CD8-positive, alpha-beta T cell (primary cell): ENCODE measurements at regions of chr13 and their contacts with region 1.

Region 1: DNA sequence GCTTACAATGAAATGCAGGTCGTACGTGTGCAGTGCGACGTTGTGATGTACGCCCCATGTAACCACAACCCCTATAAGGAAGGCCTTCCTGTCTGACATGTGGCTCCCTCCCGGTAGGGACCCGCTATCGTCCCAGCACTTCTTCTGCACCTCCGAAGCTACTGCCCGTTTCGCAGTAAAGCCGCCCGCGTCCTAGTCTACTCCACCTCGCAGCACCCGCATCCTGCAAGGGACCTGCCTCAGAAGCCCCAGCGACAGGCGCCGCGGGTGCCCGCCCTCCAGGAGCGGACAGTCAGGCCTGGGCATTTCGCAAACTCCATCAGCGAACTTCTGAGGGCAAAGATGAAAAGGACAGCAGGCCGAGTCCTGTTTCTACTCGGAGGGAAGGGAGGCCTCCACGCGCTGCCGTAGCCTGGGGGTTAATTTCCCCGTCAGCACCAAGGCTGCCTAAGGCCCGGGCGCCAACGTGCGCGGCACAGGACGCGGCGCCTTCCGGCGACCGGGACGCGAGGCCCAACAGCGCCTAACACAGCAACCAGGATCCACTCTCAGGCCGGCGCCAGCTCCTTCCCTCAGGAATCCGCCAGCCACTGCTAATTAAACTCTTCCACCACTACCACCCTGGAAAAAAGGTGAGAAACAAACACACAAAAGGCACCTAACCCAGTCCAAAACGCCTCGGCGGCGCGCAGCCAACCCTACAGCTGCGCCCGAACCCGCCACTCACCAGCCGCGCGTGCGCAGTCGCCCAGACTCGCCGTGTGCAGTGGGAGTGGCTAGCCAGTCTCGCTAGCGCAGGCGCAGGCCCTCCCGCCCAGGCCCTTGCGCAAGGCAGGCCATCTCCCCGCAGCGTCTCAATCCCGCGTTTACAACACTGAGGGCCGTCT is at the start of gene EEF1AKMT1:
- DNase-seq: peak; percentile 91 to 97 (median 94)
- ATAC-seq: peak; percentile 86
- H3K4me3 ChIP-seq: peak within 1 kb of the TSS; percentile 81 to 88
- H3K4me3 Mint-ChIP-seq: peak within 1 kb of the TSS; percentile 88
- H3K27ac ChIP-seq: peak within 1 kb of the TSS; percentile 95 to 96
- H3K27ac Mint-ChIP-seq: peak within 1 kb of the TSS; percentile 95
- H3K4me1 ChIP-seq: peaks cover 20% of the 10 kb centered on the region
- H3K4me1 Mint-ChIP-seq: peaks cover 34% of the 10 kb centered on the region
- H3K27me3 ChIP-seq: no peaks in the 10 kb centered on the region
- H3K27me3 Mint-ChIP-seq: no peaks in the 10 kb centered on the region
- CTCF ChIP-seq: no peak
- total RNA-seq, gene EEF1AKMT1: 1.5 to 2.4 TPM

Region 2: GRCh38 chr13:19863323-19864023 is 910.0 kb before region 1 on chr13 and contains the start of gene ZMYM5:
- CTCF ChIA-PET with region 1: no interaction called
- POLR2A ChIA-PET with region 1: no interaction called
- intact Hi-C with region 1: loop called in 1 of 2 experiments (anchors 10 kb)
- DNase-seq: peak; percentile 85 to 98 (median 95)
- ATAC-seq: peak; percentile 83
- H3K4me3 ChIP-seq: peak within 1 kb of the TSS; percentile 64 to 74
- H3K4me3 Mint-ChIP-seq: peak within 1 kb of the TSS; percentile 90
- H3K27ac ChIP-seq: peak within 1 kb of the TSS; percentile 78 to 97
- H3K27ac Mint-ChIP-seq: peak within 1 kb of the TSS; percentile 97
- H3K4me1 ChIP-seq: peaks cover 25% of the 10 kb centered on the region
- H3K4me1 Mint-ChIP-seq: peaks cover 35% of the 10 kb centered on the region
- H3K27me3 ChIP-seq: no peaks in the 10 kb centered on the region
- H3K27me3 Mint-ChIP-seq: no peaks in the 10 kb centered on the region
- CTCF ChIP-seq: no peak
- total RNA-seq, gene ZMYM5: 25.1 to 25.8 TPM

Region 3: GRCh38 chr13:20495082-20496023 is 278.1 kb before region 1 on chr13:
- CTCF ChIA-PET with region 1: no interaction called
- POLR2A ChIA-PET with region 1: no interaction called
- intact Hi-C with region 1: loop called in 1 of 2 experiments (anchors 5 kb)
- DNase-seq: peak; percentile 25 to 79 (median 66)
- ATAC-seq: peak; percentile 98
- H3K4me3 ChIP-seq: no peak overlapping the region
- H3K4me3 Mint-ChIP-seq: no peak overlapping the region
- H3K27ac ChIP-seq: no peak overlapping the region
- H3K27ac Mint-ChIP-seq: no peak overlapping the region
- H3K4me1 ChIP-seq: no peaks in the 10 kb centered on the region
- H3K4me1 Mint-ChIP-seq: peaks cover 15% of the 10 kb centered on the region
- H3K27me3 ChIP-seq: no peaks in the 10 kb centered on the region
- H3K27me3 Mint-ChIP-seq: no peaks in the 10 kb centered on the region
- CTCF ChIP-seq: peak; percentile 99

Region 4: DNA sequence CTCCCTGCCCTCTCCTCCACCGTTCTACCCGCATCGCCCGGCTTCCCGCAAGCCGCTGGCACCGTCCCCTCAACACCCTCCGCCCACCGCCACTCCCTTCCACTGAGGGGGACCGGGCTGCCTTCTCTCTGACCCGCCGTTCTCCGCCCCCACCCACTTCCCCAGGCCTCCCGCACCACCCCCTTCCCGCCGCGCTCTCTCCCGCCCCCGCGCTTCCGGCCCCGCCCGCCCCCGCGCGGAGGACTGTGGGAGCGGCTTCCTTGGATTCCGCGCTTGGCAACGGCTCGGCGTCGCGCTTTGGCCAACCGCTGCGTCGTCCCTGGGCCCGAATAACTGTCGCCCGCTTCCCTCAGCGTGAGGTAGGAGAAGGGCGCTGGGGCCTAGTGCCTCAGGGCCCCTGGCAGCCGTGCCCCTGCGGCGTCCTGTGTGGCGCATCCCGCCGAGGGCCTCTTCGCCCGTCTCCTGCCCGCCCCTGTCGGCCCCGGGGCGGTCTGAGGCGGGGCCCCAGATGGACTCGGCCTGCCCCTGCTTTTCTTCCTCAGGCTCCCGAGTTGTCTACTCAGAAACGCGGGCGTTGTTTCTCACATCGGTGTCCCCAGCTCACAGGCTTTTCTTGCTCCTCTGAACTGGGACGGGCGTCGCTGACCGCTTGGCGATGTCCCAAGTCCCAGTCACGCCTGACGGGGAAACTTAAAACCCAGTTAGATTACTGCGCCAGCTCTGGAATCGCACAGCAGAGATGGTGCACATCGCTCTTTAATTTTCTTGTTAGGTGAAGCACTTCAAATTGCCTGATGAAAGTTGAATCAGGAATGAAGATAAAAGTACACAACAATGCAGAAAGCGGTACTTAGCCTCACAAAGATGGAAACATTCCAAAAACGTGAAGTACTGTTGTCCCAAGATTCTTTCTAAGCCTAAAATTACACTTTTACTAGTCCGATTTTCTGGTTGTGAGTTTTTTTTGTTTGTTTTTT is 206.3 kb before region 1 on chr13 and contains the start of gene IFT88:
- CTCF ChIA-PET with region 1: no interaction called
- POLR2A ChIA-PET with region 1: no interaction called
- intact Hi-C with region 1: loop called (anchors 5 kb)
- DNase-seq: peak; percentile 49 to 90 (median 80)
- ATAC-seq: peak; percentile 86
- H3K4me3 ChIP-seq: peak within 1 kb of the TSS; percentile 70 to 71
- H3K4me3 Mint-ChIP-seq: peak within 1 kb of the TSS; percentile 87
- H3K27ac ChIP-seq: peak within 1 kb of the TSS; percentile 70 to 77
- H3K27ac Mint-ChIP-seq: peak within 1 kb of the TSS; percentile 89
- H3K4me1 ChIP-seq: no peaks in the 10 kb centered on the region
- H3K4me1 Mint-ChIP-seq: peaks cover 17% of the 10 kb centered on the region
- H3K27me3 ChIP-seq: no peaks in the 10 kb centered on the region
- H3K27me3 Mint-ChIP-seq: no peaks in the 10 kb centered on the region
- CTCF ChIP-seq: no peak
- total RNA-seq, gene IFT88: 7.5 to 8.2 TPM

Region 5: DNA sequence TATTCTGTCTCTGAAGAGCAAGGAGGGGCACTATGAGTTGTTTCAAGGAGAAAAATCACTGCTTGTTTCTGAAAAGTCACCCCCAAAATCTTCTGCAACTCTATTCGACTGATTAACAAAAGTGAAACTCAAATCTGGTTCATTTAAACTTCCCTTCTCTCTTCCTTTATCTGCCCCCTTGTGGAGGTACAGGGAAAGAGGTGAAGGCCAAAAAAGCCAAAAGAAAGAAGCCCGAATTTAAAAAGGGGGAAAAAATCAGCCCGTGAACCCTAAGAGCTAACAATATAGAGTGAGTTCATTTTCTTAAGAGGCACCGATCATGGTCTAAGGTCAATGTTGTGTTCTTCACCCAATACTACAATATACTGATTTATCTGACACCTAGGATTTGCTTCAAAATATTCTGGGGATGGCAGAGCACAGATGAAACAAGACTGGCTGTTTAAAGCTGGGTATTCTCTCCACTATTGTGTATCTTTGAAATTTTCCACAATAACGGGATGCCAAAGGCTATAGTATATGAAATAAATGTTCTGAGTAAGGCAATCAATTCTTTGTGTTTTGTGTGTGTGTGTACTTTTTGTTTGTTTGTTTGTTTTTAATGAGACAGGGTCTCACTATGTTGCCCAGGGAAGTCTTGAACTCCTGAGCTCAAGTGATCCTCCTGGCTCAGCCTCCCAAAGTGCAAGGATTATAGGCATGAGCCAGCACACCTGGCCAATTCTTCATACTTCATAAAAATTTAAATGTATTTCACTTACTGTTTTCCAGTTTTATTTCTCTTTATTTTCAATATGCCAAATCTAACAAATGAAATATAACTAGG is 55.3 kb after region 1 on chr13:
- CTCF ChIA-PET with region 1: interaction called, 7 read pairs
- POLR2A ChIA-PET with region 1: interaction called, 5 read pairs
- intact Hi-C with region 1: loop called in 1 of 2 experiments (anchors 5 kb)
- DNase-seq: peak in 6 of 9 experiments; percentile 5 to 81 (median 36)
- ATAC-seq: peak; percentile 94
- H3K4me3 ChIP-seq: peak overlapping the region in 1 of 2 experiments; percentile 10
- H3K4me3 Mint-ChIP-seq: peak overlapping the region; percentile 44
- H3K27ac ChIP-seq: no peak overlapping the region
- H3K27ac Mint-ChIP-seq: peak overlapping the region; percentile 70
- H3K4me1 ChIP-seq: no peaks in the 10 kb centered on the region
- H3K4me1 Mint-ChIP-seq: peaks cover 7% of the 10 kb centered on the region
- H3K27me3 ChIP-seq: no peaks in the 10 kb centered on the region
- H3K27me3 Mint-ChIP-seq: no peaks in the 10 kb centered on the region
- CTCF ChIP-seq: peak; percentile 71

Region 6: DNA sequence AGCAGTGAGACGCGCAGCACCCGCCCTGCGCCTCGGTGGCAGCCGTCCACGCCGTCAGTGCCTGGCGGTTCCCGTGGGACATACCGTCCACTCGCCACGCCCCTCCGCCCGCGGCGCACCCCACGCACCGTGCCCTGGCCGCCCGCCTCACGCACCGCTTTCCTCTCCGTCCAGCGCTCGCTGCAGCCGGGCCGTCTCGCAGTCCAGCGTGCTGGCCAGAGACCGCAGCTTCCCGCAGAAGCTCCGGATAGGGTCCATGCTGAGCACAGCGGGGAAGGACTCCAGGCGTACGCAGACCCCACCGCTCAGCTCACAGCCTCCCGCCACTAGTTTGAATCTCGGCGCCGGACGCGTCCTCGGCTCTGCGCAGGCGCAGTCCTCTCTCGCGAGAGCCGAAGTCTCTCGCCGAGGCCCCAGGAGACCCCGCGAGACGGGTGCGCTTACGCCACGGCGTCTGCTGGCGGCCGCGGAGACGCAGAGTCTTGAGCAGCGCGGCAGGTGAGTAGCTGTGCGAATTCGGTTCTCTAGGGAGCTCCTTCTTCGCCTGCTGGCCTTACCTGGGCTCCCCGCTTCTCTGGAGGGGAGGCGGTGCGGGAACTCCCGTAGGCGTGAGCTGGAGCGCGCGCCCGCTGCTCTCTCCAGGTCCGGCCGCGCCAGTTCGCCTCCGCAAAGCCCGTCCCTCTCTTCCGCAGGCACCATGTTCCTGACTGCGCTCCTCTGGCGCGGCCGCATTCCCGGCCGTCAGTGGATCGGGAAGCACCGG is 403.0 kb after region 1 on chr13 and contains the starts of genes MRPL57 and SKA3:
- CTCF ChIA-PET with region 1: no interaction called
- POLR2A ChIA-PET with region 1: no interaction called
- intact Hi-C with region 1: loop called in 1 of 2 experiments (anchors 10 kb)
- DNase-seq: peak; percentile 86 to 97 (median 93)
- ATAC-seq: peak; percentile 97
- H3K4me3 ChIP-seq: peak within 1 kb of the TSS; percentile 83 to 93
- H3K4me3 Mint-ChIP-seq: peak within 1 kb of the TSS; percentile 97
- H3K27ac ChIP-seq: peak within 1 kb of the TSS; percentile 80 to 92
- H3K27ac Mint-ChIP-seq: peak within 1 kb of the TSS; percentile 96
- H3K4me1 ChIP-seq: peaks cover 18% of the 10 kb centered on the region
- H3K4me1 Mint-ChIP-seq: peaks cover 26% of the 10 kb centered on the region
- H3K27me3 ChIP-seq: no peaks in the 10 kb centered on the region
- H3K27me3 Mint-ChIP-seq: no peaks in the 10 kb centered on the region
- CTCF ChIP-seq: no peak
- total RNA-seq, gene MRPL57: 9.8 to 11.1 TPM
- total RNA-seq, gene SKA3: 0.36 to 0.49 TPM